PC-3 (cell line): ENCODE measurements at regions of chr2 and their contacts with region 1.

Region 1: DNA sequence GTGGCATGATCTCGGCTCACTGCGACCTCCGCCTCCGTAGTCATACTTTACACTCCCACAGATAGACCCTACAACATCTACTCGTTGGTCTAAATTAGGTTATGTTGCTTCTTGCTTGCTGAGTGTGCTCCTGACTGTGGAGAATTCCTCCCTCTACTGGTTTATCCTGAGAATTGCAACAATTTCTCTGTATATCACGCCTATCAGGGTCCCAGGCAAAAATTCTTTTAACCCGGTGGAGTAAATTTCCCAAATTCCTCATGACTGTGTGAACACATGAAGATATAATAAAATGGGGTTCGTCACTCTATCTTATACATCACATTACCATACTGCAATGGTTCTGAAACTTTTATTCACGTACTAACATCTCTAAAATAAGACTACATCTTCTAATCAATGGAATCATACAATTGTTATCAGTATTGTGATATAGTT is 156.7 kb downstream of the EVA1A start:
- DNase-seq: peak; percentile 76
- ATAC-seq: peak; percentile 97
- H3K4me3 ChIP-seq: no peak overlapping the region
- H3K27ac ChIP-seq: no peak overlapping the region
- H3K4me1 ChIP-seq: no peaks in the 10 kb centered on the region
- H3K27me3 ChIP-seq: peaks cover 42% of the 10 kb centered on the region
- CTCF ChIP-seq: peak; percentile 86

Region 2: DNA sequence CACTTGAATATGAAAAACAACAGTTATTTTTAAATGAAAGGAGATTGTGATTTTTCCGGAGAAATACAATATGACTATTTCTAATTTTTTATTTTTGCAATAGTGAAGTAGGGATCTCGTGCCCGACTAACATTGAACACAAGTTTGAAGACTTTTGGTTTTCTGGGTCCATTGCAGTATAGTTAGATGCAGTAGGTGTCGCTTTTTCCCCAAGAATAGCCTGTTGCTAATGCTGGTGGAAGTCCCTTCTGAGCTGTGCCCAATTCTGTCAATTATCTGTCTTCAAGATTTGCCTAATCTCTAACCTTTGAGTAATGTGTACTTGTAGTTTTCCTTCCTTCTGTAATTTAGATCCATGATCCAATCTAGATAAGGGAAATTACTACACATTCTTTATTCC is 713.4 kb before region 1 on chr2:
- CTCF ChIA-PET with region 1: no interaction called
- POLR2A ChIA-PET with region 1: no interaction called
- intact Hi-C with region 1: loop called (anchors 2 kb)
- DNase-seq: peak; percentile 88
- ATAC-seq: peak; percentile 81
- H3K4me3 ChIP-seq: no peak overlapping the region
- H3K27ac ChIP-seq: no peak overlapping the region
- H3K4me1 ChIP-seq: peaks cover 41% of the 10 kb centered on the region
- H3K27me3 ChIP-seq: no peaks in the 10 kb centered on the region
- CTCF ChIP-seq: peak; percentile 95

Region 3: GRCh38 chr2:75053484-75054112 is 350.4 kb before region 1 on chr2:
- CTCF ChIA-PET with region 1: no interaction called
- POLR2A ChIA-PET with region 1: no interaction called
- intact Hi-C with region 1: loop called (anchors 5 kb)
- DNase-seq: peak; percentile 77
- ATAC-seq: peak; percentile 100
- H3K4me3 ChIP-seq: no peak overlapping the region
- H3K27ac ChIP-seq: no peak overlapping the region
- H3K4me1 ChIP-seq: no peaks in the 10 kb centered on the region
- H3K27me3 ChIP-seq: no peaks in the 10 kb centered on the region
- CTCF ChIP-seq: peak; percentile 90

Region 4: GRCh38 chr2:75157430-75157829 is 246.6 kb before region 1 on chr2:
- CTCF ChIA-PET with region 1: no interaction called
- POLR2A ChIA-PET with region 1: no interaction called
- intact Hi-C with region 1: loop called (anchors 1 kb)
- DNase-seq: peak; percentile 60
- ATAC-seq: peak; percentile 67
- H3K4me3 ChIP-seq: no peak overlapping the region
- H3K27ac ChIP-seq: no peak overlapping the region
- H3K4me1 ChIP-seq: peaks cover 17% of the 10 kb centered on the region
- H3K27me3 ChIP-seq: peaks cover 2% of the 10 kb centered on the region; the same call in 1 of the 2 replicates
- CTCF ChIP-seq: peak; percentile 68

Region 5: DNA sequence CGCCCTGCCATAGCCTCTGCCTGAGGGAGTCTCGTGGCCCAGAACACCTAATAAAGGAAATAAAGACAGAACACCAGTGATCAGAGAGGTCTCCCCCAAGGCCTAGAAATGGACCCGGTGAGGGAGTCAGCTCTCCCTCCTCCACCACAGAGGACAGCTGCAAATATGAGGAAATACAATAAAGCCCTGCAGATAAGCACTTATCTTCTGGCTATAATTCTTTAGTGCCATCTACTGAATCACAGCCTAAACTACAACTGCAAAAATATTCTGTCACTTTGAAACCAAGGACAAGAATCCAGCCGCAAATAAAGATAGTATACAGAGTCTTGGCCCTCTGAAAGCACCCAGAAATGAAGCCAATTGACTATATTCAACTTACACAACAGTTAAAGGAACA is 162.3 kb before region 1 on chr2:
- CTCF ChIA-PET with region 1: no interaction called
- POLR2A ChIA-PET with region 1: no interaction called
- intact Hi-C with region 1: loop called (anchors 5 kb)
- DNase-seq: peak; percentile 66
- ATAC-seq: peak; percentile 63
- H3K4me3 ChIP-seq: no peak overlapping the region
- H3K27ac ChIP-seq: no peak overlapping the region
- H3K4me1 ChIP-seq: peaks cover 19% of the 10 kb centered on the region
- H3K27me3 ChIP-seq: no peaks in the 10 kb centered on the region
- CTCF ChIP-seq: peak; percentile 82

Region 6: GRCh38 chr2:75268112-75268511 is 135.9 kb before region 1 on chr2:
- CTCF ChIA-PET with region 1: no interaction called
- POLR2A ChIA-PET with region 1: no interaction called
- intact Hi-C with region 1: no loop called
- DNase-seq: no peak
- ATAC-seq: no peak
- H3K4me3 ChIP-seq: no peak overlapping the region
- H3K27ac ChIP-seq: no peak overlapping the region
- H3K4me1 ChIP-seq: no peaks in the 10 kb centered on the region
- H3K27me3 ChIP-seq: no peaks in the 10 kb centered on the region
- CTCF ChIP-seq: no peak